ENCODE measurements at regions of chr19 and their contacts with region 1.

Region 1: DNA sequence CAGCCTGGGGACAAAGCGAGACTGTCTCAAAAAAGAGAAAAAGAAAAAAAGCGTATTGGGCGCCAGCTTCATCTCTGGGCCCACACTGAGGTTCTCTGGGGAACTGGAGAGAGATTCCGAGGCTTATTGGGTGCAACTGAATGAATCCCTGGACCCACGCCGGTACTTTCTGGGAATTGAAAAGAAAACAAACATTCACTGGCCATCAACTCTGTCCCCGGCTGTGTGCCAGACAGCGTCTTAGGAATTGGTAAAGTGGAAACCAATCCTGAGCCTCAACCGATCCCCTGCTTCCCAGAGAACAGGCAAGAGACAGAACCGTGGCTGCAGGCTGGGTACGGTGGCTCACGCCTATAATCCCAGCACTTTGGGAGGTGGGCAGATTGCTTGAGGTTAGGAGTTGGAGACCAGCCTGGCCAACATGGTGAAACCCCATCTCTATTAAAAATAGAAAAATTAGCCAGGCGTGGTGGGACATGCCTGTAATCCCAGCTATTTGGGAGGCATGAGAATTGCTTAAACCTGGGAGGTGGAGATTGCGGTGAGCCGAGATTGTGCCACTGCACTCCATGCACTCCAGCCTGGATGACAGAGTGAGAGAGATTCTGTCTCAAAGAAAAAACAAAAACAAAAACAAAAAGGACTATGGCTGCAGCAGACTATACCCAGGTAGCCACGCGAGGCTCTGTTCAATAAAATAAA is 8.6 kb downstream of the ANO8 start:
- DNase-seq: no peak
- ATAC-seq: no peak
- H3K4me3 ChIP-seq: no peak overlapping the region
- H3K27ac ChIP-seq: no peak overlapping the region
- H3K4me1 ChIP-seq: peaks cover 3 to 56% of the 10 kb centered on the region in 2 experiments; a peak in 4 of 5 replicates
- H3K27me3 ChIP-seq: no peaks in the 10 kb centered on the region
- CTCF ChIP-seq: no peak
- EP300 ChIP-seq: no peak
- POLR2A ChIP-seq: no peak
- RAD21 ChIP-seq: no peak

Region 2: DNA sequence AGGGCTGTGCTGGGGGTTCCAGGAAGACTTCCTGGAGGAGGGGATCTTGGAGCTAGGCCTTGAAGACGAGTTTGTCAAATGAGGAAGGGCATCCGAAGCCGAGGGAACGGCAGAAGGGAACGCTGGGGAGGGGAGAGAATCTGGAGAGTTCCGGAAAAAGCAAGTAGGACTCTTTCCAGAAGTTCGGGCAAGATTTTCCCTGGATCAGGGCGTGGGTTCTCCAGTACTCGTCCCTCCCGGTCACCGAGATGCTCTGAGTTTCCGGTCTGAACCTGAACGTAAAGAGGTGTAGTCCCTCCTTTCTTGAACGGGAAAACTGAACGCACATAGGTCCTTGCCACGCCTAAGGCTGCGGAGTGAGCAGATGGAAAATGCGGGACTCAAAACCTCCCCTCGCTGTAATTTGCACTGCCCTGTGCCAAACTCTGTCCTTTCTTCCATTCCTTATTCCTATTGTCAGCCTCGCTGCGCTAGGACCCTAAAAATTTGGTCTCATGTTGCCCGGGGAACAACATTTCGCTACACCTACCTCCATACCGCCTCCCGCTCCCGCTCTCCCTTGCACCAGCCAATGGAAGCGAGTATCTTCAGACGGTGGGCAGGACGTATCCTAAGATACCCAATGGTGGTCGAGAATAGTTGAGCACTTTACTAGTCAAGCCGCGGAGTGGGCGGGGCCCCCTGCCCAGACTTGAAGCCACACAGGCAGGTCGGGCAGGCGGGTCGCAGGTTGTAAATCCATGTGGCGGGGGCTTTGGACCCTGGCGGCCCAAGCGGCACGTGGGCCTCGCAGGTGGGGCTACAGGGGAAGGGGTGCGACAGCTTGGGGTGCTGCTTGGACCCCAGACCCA is 11.0 kb after region 1 on chr19 and contains the start of gene GTPBP3:
- CTCF ChIA-PET with region 1: no interaction called
- POLR2A ChIA-PET with region 1: interaction called, 41 read pairs
- in situ Hi-C with region 1: no loop called
- intact Hi-C with region 1: no loop called
- DNase-seq: peak; percentile 91 to 100 (median 96)
- ATAC-seq: peak; percentile 82
- H3K4me3 ChIP-seq: peak within 1 kb of the TSS; percentile 84
- H3K27ac ChIP-seq: peak within 1 kb of the TSS; percentile 87
- H3K4me1 ChIP-seq: peaks cover 29 to 79% of the 10 kb centered on the region in 2 experiments; a peak in 4 of 5 replicates
- H3K27me3 ChIP-seq: no peaks in the 10 kb centered on the region
- CTCF ChIP-seq: peak in 1 of 3 experiments; percentile 9; a peak in 1 of 6 replicates
- EP300 ChIP-seq: peak; percentile 65
- POLR2A ChIP-seq: peak; percentile 92
- RAD21 ChIP-seq: no peak
- polyA plus RNA-seq, gene GTPBP3: 4.9 to 5.6 TPM

Measured in K562 (cell line).